ENCODE measurements at regions of chr16 and their contacts with region 1.

Region 1: DNA sequence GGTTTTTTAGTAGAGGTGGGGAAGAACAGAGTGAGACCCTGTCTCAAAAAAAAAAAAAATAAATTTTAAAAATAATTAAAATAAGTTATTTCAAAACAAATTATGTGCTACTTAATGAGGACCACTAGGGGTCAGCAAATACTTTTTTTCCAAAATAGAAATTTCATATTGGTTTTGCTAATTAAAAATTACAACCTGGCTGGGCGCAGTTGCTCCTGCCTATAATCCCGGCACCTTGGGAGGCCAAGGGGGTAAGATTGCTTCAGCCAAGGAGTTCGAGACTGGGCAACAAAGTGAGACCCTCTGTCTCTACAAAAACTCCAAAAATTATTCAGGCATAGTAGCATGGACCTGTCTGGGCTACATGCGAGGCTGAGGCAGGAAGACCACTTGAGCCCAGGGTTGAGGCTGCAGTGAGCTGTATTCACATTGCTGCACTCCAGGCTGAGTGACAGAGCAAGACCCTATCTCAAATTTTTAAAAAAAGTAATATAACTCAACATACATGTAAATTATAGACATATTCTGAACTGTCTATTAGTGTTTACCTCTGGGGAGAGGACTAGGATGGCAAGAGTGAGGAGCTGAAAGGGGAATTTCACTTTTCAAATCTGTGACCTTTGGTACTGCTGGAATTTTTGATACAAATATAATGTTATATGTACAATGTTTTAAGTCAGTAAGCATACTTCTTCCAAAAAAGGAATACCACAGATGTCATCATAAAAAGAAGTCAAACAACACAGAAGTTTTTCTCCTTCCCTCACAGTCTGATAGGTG is 8.1 kb downstream of the MEIOB start:
- DNase-seq: peak; percentile 12 to 32 (median 21)
- H3K4me3 ChIP-seq: no peak overlapping the region
- H3K4me3 Mint-ChIP-seq: no peak overlapping the region
- H3K27ac ChIP-seq: no peak overlapping the region
- H3K27ac Mint-ChIP-seq: no peak overlapping the region
- H3K4me1 ChIP-seq: no peaks in the 10 kb centered on the region
- H3K4me1 Mint-ChIP-seq: no peaks in the 10 kb centered on the region
- H3K27me3 ChIP-seq: peaks cover 16 to 40% of the 10 kb centered on the region in 2 donors
- H3K27me3 Mint-ChIP-seq: peaks cover 40 to 55% (median 44%) of the 10 kb centered on the region in 3 donors
- CTCF ChIP-seq: peak; percentile 73

Region 2: DNA sequence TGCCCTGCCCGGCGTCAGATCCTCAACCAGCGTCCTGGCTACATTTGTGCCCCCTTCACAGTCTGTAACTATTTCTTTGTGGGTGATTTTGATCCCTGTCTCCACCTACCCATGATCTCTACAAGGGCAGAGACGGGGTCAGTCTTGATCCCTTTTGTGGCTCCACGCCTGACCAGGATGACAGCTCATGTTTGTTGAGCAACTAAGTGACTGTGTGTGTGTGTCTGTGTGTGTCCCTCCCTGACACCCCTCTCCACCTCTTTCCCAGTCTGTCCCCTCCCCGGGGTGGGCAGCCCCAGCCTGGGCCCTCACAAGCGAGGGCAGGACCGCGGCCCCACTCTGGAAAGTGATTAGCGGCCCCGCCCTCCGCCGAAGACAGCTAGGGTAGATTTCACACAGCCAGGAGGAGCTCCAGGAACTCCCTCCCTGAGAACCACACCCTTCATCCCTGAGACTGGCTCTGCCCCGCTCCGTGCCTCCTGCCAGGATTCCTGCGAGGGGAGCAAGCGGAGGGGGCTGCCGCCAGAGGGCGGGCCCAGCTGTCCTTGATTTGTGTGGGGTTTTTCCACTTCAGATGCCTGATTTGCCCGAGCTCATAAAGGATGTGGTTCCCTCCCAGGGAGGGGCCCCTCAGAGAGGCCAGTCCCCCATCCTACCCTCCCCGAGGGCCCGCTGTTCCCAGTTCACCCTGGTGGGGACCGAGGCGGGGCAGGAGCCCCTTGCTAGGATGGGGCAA is 59.6 kb after region 1 on chr16:
- intact Hi-C with region 1: loop called (anchors 2 to 5 kb)
- DNase-seq: peak in 2 of 3 donors; percentile 8 to 44
- H3K4me3 ChIP-seq: no peak overlapping the region
- H3K4me3 Mint-ChIP-seq: peak overlapping the region in 1 of 2 donors; percentile 76
- H3K27ac ChIP-seq: no peak overlapping the region
- H3K27ac Mint-ChIP-seq: no peak overlapping the region
- H3K4me1 ChIP-seq: peaks cover 6 to 9% of the 10 kb centered on the region in 2 donors
- H3K4me1 Mint-ChIP-seq: peaks cover 16% of the 10 kb centered on the region
- H3K27me3 ChIP-seq: peaks cover 8 to 61% of the 10 kb centered on the region in 2 donors
- H3K27me3 Mint-ChIP-seq: peaks cover 64 to 71% (median 70%) of the 10 kb centered on the region in 3 donors
- CTCF ChIP-seq: peak; percentile 11

Region 3: DNA sequence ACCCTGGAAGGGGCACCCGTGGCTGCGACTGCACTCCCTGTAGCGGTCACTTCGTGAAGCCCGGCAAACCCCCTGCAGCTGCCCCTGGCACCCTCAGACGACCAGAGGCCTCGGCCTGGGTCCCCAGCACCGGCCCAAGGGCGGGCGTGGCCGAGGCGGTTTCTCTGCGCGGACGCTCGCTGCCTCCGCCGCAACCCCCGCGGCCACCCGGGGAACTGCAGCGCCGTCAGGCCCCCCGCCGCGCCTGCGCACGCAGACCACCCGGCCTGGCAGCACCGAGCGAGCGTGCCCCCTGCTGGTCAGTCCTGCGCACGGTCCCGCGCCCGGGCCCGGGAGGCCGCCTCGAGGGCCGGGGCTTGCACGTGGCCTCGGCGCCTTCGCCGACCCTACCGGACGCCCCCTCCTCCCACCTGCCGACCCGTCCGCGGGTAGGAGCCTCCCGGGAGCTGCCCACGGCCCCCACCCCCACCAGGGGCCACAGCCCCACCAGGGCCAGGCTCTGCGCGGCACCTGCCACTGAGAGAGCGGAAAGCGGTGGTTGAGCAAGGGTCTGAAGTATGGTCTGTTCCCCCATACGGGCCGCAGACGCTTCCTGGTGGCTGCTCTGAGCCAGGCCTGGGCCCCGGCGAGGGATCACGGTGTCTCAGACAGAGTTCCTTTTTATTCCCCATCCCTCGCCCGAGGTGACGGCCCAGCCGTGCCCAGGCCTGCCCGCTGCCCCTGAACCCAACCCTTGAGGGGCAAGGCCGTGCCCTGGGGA is 65.9 kb after region 1 on chr16:
- intact Hi-C with region 1: loop called (anchors 2 to 5 kb)
- DNase-seq: peak; percentile 84 to 91 (median 84)
- H3K4me3 ChIP-seq: peak overlapping the region; percentile 27 to 82 (median 52)
- H3K4me3 Mint-ChIP-seq: peak overlapping the region; percentile 80 to 87
- H3K27ac ChIP-seq: peak overlapping the region; percentile 45 to 59
- H3K27ac Mint-ChIP-seq: no peak overlapping the region
- H3K4me1 ChIP-seq: peaks cover 10 to 18% of the 10 kb centered on the region in 2 donors
- H3K4me1 Mint-ChIP-seq: peaks cover 20% of the 10 kb centered on the region
- H3K27me3 ChIP-seq: no peaks in the 10 kb centered on the region
- H3K27me3 Mint-ChIP-seq: peaks cover 8 to 12% (median 8%) of the 10 kb centered on the region in 3 donors
- CTCF ChIP-seq: peak; percentile 100

Region 4: GRCh38 chr16:2147981-2148671 is 284.3 kb after region 1 on chr16 and contains the start of gene RAB26:
- intact Hi-C with region 1: loop called in 1 of 2 experiments (anchors 5 kb)
- DNase-seq: no peak
- H3K4me3 ChIP-seq: peak within 1 kb of the TSS in 2 of 3 experiments; percentile 20 to 64
- H3K4me3 Mint-ChIP-seq: peak within 1 kb of the TSS; percentile 43 to 70
- H3K27ac ChIP-seq: no peak within 1 kb of the TSS
- H3K27ac Mint-ChIP-seq: no peak within 1 kb of the TSS
- H3K4me1 ChIP-seq: peaks cover 21 to 32% of the 10 kb centered on the region in 2 donors
- H3K4me1 Mint-ChIP-seq: peaks cover 30% of the 10 kb centered on the region
- H3K27me3 ChIP-seq: peaks cover 0 to 24% of the 10 kb centered on the region in 2 donors
- H3K27me3 Mint-ChIP-seq: peaks cover 15 to 38% (median 19%) of the 10 kb centered on the region in 3 donors
- CTCF ChIP-seq: no peak
- polyA plus RNA-seq, gene RAB26: not detected

Measured in CD14-positive monocyte (primary cell).